Ovary (tissue), 10 donors: ENCODE measurements at regions of chr6 and their contacts with region 1.

Region 1: GRCh38 chr6:134063966-134064445 is 11.6 kb upstream of the SLC2A12 start:
- DNase-seq: peak; percentile 46 to 71 (median 52)
- H3K4me3 ChIP-seq: no peak overlapping the region
- H3K27ac ChIP-seq: no peak overlapping the region
- H3K4me1 ChIP-seq: no peaks in the 10 kb centered on the region
- H3K27me3 ChIP-seq: no peaks in the 10 kb centered on the region
- CTCF ChIP-seq: peak; percentile 16 to 60 (median 49)
- EP300 ChIP-seq: no peak
- POLR2A ChIP-seq: no peak

Region 2: GRCh38 chr6:133865680-133866079 is 198.3 kb before region 1 on chr6:
- intact Hi-C with region 1: no loop called
- DNase-seq: no peak
- H3K4me3 ChIP-seq: no peak overlapping the region
- H3K27ac ChIP-seq: no peak overlapping the region
- H3K4me1 ChIP-seq: no peaks in the 10 kb centered on the region
- H3K27me3 ChIP-seq: no peaks in the 10 kb centered on the region
- CTCF ChIP-seq: no peak
- EP300 ChIP-seq: no peak
- POLR2A ChIP-seq: no peak

Region 3: DNA sequence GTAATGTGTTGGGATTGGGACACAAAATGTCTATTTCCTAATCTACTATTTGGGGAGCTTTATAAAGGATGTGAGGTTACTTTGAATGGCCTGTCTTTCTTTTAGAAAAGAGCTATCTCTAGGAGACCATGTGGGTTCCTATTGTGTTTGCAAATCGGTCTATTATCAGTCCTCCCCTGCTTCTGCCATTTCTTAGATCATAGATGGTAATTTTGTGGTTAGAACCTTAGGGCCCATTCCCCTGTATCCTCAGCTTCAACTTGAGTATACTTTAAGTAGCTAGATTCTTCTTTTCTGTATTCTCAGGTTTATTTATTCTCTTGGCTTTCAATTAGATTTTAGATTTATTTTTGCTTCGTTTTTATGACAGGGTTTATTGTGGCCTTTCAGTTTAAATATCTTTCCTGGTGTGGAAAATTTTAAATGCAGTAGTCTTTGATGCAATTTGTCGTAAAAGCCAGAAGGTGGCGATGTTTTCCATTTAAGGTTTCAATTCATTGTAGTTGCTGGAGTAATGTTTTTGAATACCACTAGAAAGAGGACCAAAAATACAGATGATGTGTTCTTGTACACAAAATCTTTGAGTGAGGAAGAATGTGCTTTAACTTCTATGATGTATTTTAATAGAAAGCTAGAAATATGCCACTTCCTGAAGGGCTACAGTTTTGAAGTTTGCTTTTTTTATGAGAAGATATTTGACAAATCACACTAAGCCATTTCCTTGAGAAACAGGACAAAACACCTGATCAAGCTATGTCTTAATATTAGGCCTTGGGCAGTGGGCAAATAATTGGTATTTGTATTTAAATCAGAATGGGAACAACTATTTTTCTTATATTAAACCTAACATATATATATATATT is 90.7 kb before region 1 on chr6:
- intact Hi-C with region 1: loop called in 2 of 4 experiments (anchors 5 to 10 kb)
- DNase-seq: no peak
- H3K4me3 ChIP-seq: no peak overlapping the region
- H3K27ac ChIP-seq: no peak overlapping the region
- H3K4me1 ChIP-seq: peaks cover 2% of the 10 kb centered on the region
- H3K27me3 ChIP-seq: no peaks in the 10 kb centered on the region
- CTCF ChIP-seq: peak; percentile 22 to 51 (median 48)
- EP300 ChIP-seq: no peak
- POLR2A ChIP-seq: no peak